Activated CD4-positive, alpha-beta T cell treated with anti-CD3 and anti-CD28 coated beads, Interleukin-2, amount 10 ng/mL, durations not matched to agents 24 days and 14 days (primary cell): ENCODE measurements at regions of chr16 and their contacts with region 1.

Region 1: GRCh38 chr16:4116337-4117249 is at the start of gene ADCY9:
- DNase-seq: peak; percentile 96
- H3K4me3 Mint-ChIP-seq: peak within 1 kb of the TSS; percentile 84
- H3K27ac Mint-ChIP-seq: peak within 1 kb of the TSS; percentile 73
- H3K4me1 Mint-ChIP-seq: peaks cover 36% of the 10 kb centered on the region
- H3K27me3 Mint-ChIP-seq: peaks cover 11% of the 10 kb centered on the region
- total RNA-seq, gene ADCY9: 8.9 and 9.6 TPM in 2 replicates

Region 2: DNA sequence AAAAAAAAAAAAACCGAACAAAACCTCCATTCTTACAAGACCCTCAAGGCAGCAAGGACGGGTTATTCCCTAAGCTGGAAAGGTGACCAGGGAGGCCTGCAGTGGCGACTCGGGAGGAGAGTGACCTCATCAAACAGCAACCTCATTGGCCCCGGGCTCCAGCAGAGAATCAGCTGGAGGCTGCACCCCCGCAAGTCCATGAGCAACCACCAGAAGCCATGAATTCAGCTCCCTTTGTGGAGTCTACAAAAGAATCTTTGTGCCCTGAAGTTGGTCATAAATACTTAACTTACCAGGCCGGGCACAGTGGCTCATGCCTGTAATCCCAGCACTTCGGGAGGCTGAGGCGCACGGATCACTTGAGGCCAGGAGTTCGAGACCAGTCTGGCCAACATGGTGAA is 155.1 kb before region 1 on chr16:
- intact Hi-C with region 1: loop called (anchors 10 kb)
- DNase-seq: no peak
- H3K4me3 Mint-ChIP-seq: no peak overlapping the region
- H3K27ac Mint-ChIP-seq: no peak overlapping the region
- H3K4me1 Mint-ChIP-seq: peaks cover 23% of the 10 kb centered on the region
- H3K27me3 Mint-ChIP-seq: peaks cover 17% of the 10 kb centered on the region

Region 3: DNA sequence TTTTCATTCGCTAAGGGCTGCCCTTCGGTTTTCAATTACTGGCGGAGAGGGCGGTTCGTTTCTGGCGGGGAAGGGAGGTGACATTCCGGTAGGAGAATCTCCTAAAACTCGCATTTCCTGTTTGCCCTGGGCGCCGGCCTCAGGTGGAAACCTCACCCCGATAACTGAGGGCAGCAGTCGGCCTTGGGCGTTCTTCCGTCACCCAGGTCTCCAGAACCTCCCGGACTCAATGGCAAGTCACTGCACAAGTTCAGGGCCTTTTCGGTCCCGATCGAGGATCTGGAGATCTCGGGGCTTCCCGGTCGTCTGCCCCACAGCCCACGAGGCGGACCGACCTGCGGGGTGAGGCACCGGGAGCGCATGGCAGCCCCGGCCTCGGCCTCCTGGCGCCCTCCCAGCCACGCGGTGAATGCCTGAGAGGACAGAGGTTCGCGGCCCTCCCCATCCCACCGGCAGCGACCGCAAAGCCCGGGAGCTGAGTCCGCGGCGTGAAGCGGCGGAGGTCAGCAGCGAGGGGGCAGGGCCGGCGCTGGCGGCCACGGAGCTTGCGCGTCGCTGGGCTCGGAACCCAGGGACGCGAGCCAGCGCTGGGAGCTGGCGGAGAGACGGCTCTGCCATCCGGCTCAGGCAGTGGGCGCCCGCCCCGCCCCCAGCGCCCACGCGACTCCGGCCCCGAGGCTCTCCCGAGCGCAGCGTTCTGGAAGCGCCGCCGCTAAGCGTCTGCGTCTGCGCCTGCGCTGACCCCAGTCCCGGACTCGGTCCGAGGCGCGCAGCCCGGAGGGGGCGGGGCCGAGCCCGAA is 66.8 kb after region 1 on chr16:
- intact Hi-C with region 1: loop called (anchors 10 kb)
- DNase-seq: peak; percentile 98
- H3K4me3 Mint-ChIP-seq: peak overlapping the region; percentile 83
- H3K27ac Mint-ChIP-seq: peak overlapping the region; percentile 83
- H3K4me1 Mint-ChIP-seq: peaks cover 4% of the 10 kb centered on the region
- H3K27me3 Mint-ChIP-seq: peaks cover 17% of the 10 kb centered on the region